Prostate gland (tissue), 2 donors: ENCODE measurements at regions of chr10 and their contacts with region 1.

Region 1: DNA sequence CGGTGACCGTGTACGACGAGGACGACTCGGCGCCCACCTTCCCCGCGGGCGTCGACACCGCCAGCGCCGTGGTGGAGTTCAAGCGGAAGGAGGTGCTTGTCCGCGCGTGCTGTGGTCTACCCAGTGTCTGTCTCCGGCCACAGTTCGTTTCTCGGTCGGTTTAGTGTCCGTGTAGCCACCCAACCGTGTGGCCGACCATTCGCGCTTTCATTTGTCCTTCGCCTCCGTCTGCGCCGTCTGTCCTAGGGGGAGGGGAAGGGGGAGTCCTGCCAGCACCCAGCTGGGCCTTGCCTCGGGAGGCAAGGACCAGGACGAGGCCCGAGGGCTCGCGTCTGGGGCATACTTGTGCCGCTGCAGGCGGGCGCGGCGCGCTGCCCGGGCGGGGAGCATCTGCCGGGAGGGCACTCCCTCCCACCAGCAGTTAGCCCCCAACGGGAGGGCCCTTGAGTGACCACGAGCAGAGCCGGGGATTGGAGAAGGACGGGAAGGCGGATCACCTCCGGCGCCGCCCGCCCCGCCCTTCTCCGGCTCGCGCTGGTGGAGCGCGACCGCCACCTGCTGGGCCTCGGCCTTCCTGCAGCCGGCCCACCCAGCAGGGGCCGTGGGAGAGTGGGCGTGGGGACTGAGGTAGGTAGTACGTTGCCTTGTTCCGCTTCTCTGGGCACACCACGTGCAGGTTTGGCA is 28.4 kb downstream of the RET start:
- DNase-seq: peak; percentile 55
- H3K4me3 ChIP-seq: peak overlapping the region; percentile 43 to 45
- H3K27ac ChIP-seq: no peak overlapping the region
- H3K4me1 ChIP-seq: no peaks in the 10 kb centered on the region
- H3K27me3 ChIP-seq: no peaks in the 10 kb centered on the region
- CTCF ChIP-seq: peak; percentile 98 to 99 (median 99)
- POLR2A ChIP-seq: no peak

Region 2: GRCh38 chr10:42753126-42753506 is 352.1 kb before region 1 on chr10:
- intact Hi-C with region 1: loop called (anchors 5 kb)
- DNase-seq: peak; percentile 74
- H3K4me3 ChIP-seq: peak overlapping the region; percentile 39 to 53
- H3K27ac ChIP-seq: peak overlapping the region; percentile 72 to 82
- H3K4me1 ChIP-seq: no peaks in the 10 kb centered on the region
- H3K27me3 ChIP-seq: no peaks in the 10 kb centered on the region
- CTCF ChIP-seq: peak; percentile 57 to 83 (median 82)
- POLR2A ChIP-seq: no peak

Region 3: GRCh38 chr10:42866115-42866995 is 238.9 kb before region 1 on chr10:
- intact Hi-C with region 1: loop called (anchors 2 kb)
- DNase-seq: peak; percentile 66
- H3K4me3 ChIP-seq: peak overlapping the region in 1 of 2 donors; percentile 14
- H3K27ac ChIP-seq: no peak overlapping the region
- H3K4me1 ChIP-seq: no peaks in the 10 kb centered on the region
- H3K27me3 ChIP-seq: peaks cover 2% of the 10 kb centered on the region
- CTCF ChIP-seq: peak in 3 of 4 experiments; percentile 61 to 89 (median 73)
- POLR2A ChIP-seq: no peak

Region 4: DNA sequence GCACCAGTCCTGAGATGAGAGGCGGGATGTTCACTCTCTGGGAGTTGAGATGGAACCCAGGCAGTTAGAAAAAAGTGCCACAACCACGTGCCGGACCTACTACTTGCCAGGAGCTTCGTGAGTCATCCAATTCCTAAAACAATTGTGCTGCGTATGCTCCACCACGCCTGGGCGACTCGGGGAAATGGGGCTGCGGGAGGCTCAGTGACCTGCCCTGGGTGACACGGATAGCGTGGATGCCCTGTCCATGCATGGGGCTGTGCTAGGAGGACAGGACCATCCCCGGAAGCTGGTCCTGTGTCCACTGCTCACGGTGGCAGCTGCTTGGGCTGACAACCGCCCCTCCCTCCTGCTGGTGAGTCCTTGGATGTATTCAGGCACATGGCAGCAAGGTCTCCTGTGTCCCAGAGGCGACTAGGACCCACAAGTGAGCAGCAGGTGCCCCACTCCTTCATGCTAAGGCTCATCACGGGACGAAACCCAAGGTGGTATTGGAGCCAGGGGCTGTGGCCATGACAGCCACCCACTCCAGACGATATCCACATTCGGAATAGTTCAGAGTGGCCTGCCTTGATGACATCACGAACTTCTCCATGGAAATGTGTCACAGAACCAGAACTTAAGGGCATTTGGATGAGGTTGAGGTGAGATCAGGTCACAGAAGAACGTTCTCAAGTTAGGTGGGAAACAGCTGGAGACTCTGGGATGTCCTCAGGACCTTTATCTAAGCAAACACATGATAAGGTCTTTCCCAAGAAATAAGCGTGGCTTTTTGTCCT is 232.2 kb before region 1 on chr10:
- intact Hi-C with region 1: loop called (anchors 2 kb)
- DNase-seq: no peak
- H3K4me3 ChIP-seq: no peak overlapping the region
- H3K27ac ChIP-seq: no peak overlapping the region
- H3K4me1 ChIP-seq: no peaks in the 10 kb centered on the region
- H3K27me3 ChIP-seq: no peaks in the 10 kb centered on the region
- CTCF ChIP-seq: no peak
- POLR2A ChIP-seq: no peak

Region 5: GRCh38 chr10:42960491-42960990 is 144.7 kb before region 1 on chr10:
- intact Hi-C with region 1: no loop called
- DNase-seq: no peak
- H3K4me3 ChIP-seq: no peak overlapping the region
- H3K27ac ChIP-seq: no peak overlapping the region
- H3K4me1 ChIP-seq: no peaks in the 10 kb centered on the region
- H3K27me3 ChIP-seq: no peaks in the 10 kb centered on the region
- CTCF ChIP-seq: no peak
- POLR2A ChIP-seq: no peak